Activated T-helper 1 cell treated with anti-CD3 and anti-CD28 coated beads, Interleukin-12 subunit alpha, Interleukin-12 subunit beta, Interleukin-2, Interleukin-4 antibody, amounts not matched to agents 30 ng/mL and 10 ng/mL and 1 ng/mL, durations not matched to agents 14 hours and 24 hours and 36 hours (primary cell): ENCODE measurements at regions of chr2 and their contacts with region 1.

Region 1: DNA sequence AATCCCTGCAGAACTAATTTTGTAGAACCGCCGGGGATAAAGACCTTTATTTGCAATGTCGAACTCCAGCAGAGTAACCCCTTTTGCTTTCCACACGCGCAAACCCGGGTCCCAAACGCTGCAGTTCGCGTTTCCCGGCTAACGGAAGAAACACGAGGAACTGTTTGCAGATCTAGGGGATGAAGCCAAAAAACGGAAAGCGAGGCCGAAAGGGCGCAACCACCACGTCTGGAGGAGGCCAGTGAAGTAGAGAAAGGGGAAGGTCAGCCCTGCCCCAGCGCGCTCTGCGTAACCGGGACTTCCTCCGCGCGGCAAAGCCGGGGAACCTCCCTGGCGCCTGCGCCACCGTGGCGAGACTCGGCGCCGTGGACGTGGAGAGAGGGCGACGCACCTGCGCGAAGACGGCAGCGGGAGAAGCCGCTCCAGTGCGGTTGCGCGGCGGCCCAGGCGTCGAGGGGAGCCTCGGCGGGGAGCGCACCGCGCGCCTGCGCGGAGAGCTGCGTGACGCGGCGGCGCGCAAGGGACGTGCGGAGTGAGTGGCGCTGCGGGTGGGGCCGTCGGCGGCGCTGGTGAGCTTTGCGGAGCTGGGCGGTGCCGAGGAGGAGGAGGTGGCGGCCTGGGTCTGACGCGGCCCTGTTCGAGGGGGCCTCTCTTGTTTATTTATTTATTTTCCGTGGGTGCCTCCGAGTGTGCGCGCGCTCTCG is at the start of gene PPP1CB:
- DNase-seq: peak; percentile 98
- H3K4me3 Mint-ChIP-seq: peak within 1 kb of the TSS; percentile 95
- H3K27ac Mint-ChIP-seq: peak within 1 kb of the TSS; percentile 96
- H3K4me1 Mint-ChIP-seq: peaks cover 62% of the 10 kb centered on the region
- H3K27me3 Mint-ChIP-seq: no peaks in the 10 kb centered on the region
- total RNA-seq, gene PPP1CB: 262 and 268 TPM in 2 replicates

Region 2: GRCh38 chr2:27771548-27772335 is 979.7 kb before region 1 on chr2 and contains the start of gene MRPL33:
- intact Hi-C with region 1: loop called (anchors 1 kb)
- DNase-seq: peak; percentile 86
- H3K4me3 Mint-ChIP-seq: peak within 1 kb of the TSS; percentile 99
- H3K27ac Mint-ChIP-seq: peak within 1 kb of the TSS; percentile 96
- H3K4me1 Mint-ChIP-seq: peaks cover 47% of the 10 kb centered on the region
- H3K27me3 Mint-ChIP-seq: no peaks in the 10 kb centered on the region
- total RNA-seq, gene MRPL33: 55.4 and 55.9 TPM in 2 replicates

Region 3: GRCh38 chr2:28594289-28595108 is 156.9 kb before region 1 on chr2:
- intact Hi-C with region 1: loop called (anchors 1 kb)
- DNase-seq: peak; percentile 71
- H3K4me3 Mint-ChIP-seq: peak overlapping the region; percentile 49
- H3K27ac Mint-ChIP-seq: peak overlapping the region; percentile 78
- H3K4me1 Mint-ChIP-seq: peaks cover 30% of the 10 kb centered on the region
- H3K27me3 Mint-ChIP-seq: peaks cover 4% of the 10 kb centered on the region

Region 4: GRCh38 chr2:28649481-28650214 is 101.8 kb before region 1 on chr2:
- intact Hi-C with region 1: loop called (anchors 2 kb)
- DNase-seq: no peak
- H3K4me3 Mint-ChIP-seq: no peak overlapping the region
- H3K27ac Mint-ChIP-seq: peak overlapping the region; percentile 84
- H3K4me1 Mint-ChIP-seq: peaks cover 48% of the 10 kb centered on the region
- H3K27me3 Mint-ChIP-seq: no peaks in the 10 kb centered on the region

Region 5: GRCh38 chr2:28870146-28870891 is 118.9 kb after region 1 on chr2 and contains the start of gene TRMT61B:
- intact Hi-C with region 1: loop called (anchors 1 kb)
- DNase-seq: peak; percentile 97
- H3K4me3 Mint-ChIP-seq: peak within 1 kb of the TSS; percentile 97
- H3K27ac Mint-ChIP-seq: peak within 1 kb of the TSS; percentile 93
- H3K4me1 Mint-ChIP-seq: peaks cover 23% of the 10 kb centered on the region
- H3K27me3 Mint-ChIP-seq: peaks cover 6% of the 10 kb centered on the region
- total RNA-seq, gene TRMT61B: 18.4 and 21.4 TPM in 2 replicates

Region 6: GRCh38 chr2:29115797-29116781 is 364.7 kb after region 1 on chr2:
- intact Hi-C with region 1: loop called (anchors 5 kb)
- DNase-seq: peak; percentile 74
- H3K4me3 Mint-ChIP-seq: peak overlapping the region; percentile 93
- H3K27ac Mint-ChIP-seq: peak overlapping the region; percentile 92
- H3K4me1 Mint-ChIP-seq: peaks cover 65% of the 10 kb centered on the region
- H3K27me3 Mint-ChIP-seq: peaks cover 9% of the 10 kb centered on the region

Region 7: DNA sequence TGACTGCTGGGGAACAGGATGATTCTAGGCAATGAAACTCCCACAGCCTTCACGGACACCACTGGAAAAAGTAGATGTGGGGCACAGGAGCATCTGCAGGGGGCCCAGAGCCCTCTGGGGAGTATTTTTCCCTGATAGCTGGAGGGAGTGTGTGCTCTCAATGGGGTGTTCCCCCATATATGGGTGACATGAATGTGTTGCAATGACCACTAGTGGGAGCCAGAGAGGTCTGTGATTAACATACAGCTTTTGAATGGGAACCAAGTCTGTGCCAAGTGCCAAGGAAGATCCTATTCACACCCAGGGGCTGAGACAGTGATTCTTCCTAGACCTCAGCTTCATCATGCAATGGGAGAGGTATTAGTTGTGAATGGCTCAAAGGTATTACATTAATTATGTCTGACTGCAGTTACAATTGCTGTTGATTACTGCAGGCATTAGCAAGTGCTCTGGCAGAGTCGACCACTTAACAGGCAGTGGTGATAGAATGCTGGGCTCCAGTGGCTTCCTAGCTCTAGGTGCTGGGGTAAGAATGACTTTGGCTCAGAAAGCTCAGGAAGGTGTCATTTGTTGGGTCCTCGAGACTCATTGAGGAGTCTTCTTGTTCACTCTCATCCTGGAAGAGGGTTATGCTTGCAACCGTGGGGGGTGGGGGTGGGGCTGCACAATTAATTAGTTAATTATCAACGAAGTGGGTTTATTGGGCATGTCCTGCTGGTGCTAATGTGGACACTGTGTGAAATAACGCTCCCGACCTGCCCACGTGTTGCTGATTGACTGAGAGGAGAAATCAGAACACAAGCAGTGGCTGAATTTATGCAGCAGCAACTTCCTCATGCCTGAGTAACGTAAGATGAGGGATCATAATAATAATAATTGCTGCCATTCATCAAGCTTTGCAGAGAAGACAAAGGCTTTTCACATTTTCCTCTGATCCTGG is 558.0 kb after region 1 on chr2:
- intact Hi-C with region 1: no loop called
- DNase-seq: peak; percentile 41
- H3K4me3 Mint-ChIP-seq: no peak overlapping the region
- H3K27ac Mint-ChIP-seq: no peak overlapping the region
- H3K4me1 Mint-ChIP-seq: peaks cover 27% of the 10 kb centered on the region
- H3K27me3 Mint-ChIP-seq: peaks cover 32% of the 10 kb centered on the region